Endothelial cell of umbilical vein (primary cell): ENCODE measurements at regions of chr6 and their contacts with region 1.

Region 1: DNA sequence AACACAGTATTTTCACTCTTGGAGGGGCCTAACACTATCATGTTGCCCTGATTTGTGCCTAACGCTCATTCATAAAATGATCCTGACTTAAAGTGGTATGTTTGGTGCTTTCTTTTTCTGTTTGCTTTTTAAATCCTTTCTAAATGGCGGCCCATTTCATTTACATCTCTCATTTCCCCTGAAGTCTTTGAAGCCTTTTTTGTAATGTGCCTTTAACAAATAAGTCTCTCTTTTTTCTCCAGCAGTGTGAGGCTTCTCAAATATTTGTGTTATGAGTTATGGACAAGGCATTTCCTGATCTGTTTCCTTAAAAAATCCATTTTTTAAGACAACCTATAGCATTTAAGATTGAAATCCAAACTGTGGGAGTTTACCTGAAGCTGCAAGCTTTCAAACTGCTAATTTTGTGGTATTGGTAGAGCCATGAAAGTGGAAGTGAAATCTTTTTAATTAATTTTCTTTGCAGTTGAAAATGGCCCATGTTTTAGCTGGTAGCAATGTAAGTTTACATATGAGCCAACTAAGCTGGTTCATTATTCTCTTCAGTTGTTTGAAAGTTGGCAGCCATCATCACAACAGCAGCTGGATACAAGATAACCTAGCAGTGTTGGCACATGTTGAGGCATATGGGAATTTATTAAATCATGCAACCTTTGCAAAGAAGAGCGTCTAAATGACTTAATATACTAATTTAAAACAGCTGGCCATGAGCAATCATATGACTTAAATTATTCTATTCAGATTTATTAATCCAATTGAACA is 469.7 kb downstream of the CDKAL1 start:
- DNase-seq: peak; percentile 93
- H3K4me3 ChIP-seq: peak overlapping the region in 1 of 3 experiments; percentile 29
- H3K27ac ChIP-seq: peak overlapping the region; percentile 96
- H3K4me1 ChIP-seq: peaks cover 34% of the 10 kb centered on the region
- H3K27me3 ChIP-seq: no peaks in the 10 kb centered on the region
- CTCF ChIP-seq: no peak
- POLR2A ChIP-seq: no peak

Region 2: GRCh38 chr6:20564269-20564668 is 439.7 kb before region 1 on chr6:
- CTCF ChIA-PET with region 1: interaction called, 5 read pairs
- POLR2A ChIA-PET with region 1: no interaction called
- dilution Hi-C with region 1: no loop called
- intact Hi-C with region 1: loop called (anchors 10 kb)
- DNase-seq: peak; percentile 59
- H3K4me3 ChIP-seq: peak overlapping the region in 1 of 3 experiments; percentile 28
- H3K27ac ChIP-seq: peak overlapping the region; percentile 32
- H3K4me1 ChIP-seq: peaks cover 12% of the 10 kb centered on the region
- H3K27me3 ChIP-seq: no peaks in the 10 kb centered on the region
- CTCF ChIP-seq: peak; percentile 16 to 33
- POLR2A ChIP-seq: no peak

Region 3: DNA sequence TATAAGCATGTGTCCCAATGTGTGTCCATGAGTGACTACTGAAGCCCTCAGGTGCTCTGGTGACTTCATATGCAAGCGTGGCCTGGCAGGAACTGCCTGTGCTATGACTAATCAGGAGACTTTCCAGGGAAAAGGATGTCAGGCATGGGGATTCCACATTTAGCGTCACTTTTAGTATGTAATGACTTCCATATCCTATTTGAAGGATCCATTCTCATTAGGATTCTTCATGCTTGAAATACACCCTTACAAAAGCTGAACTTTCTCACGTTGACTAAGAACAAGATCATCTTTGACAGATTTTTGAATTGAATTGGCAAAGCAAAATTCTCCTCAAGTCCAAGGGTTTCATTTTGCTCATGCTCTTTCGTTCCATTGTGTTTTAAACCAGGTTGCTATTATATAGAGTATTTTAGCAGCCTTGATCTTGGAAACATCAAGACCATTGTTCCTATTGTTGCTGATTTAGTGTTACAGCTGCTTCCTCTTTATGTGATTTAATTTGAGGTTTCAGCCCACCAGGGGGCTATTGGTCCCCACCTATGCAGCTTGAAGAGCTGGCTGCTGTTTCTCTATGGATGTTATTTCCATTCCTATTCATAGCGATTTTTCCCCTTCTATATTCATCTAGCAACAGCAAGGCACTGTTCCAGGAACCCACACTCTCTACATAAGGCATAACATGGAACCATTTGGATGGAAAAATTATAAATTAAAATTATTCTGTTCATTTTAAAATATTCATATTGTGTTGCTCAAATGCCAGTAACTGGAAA is 51.1 kb before region 1 on chr6:
- CTCF ChIA-PET with region 1: interaction called, 5 read pairs
- POLR2A ChIA-PET with region 1: no interaction called
- dilution Hi-C with region 1: no loop called
- intact Hi-C with region 1: loop called (anchors 1 kb)
- DNase-seq: peak; percentile 95
- H3K4me3 ChIP-seq: peak overlapping the region in 1 of 3 experiments; percentile 55
- H3K27ac ChIP-seq: peak overlapping the region; percentile 94
- H3K4me1 ChIP-seq: peaks cover 14% of the 10 kb centered on the region
- H3K27me3 ChIP-seq: no peaks in the 10 kb centered on the region
- CTCF ChIP-seq: peak; percentile 26 to 50
- POLR2A ChIP-seq: no peak

Region 4: DNA sequence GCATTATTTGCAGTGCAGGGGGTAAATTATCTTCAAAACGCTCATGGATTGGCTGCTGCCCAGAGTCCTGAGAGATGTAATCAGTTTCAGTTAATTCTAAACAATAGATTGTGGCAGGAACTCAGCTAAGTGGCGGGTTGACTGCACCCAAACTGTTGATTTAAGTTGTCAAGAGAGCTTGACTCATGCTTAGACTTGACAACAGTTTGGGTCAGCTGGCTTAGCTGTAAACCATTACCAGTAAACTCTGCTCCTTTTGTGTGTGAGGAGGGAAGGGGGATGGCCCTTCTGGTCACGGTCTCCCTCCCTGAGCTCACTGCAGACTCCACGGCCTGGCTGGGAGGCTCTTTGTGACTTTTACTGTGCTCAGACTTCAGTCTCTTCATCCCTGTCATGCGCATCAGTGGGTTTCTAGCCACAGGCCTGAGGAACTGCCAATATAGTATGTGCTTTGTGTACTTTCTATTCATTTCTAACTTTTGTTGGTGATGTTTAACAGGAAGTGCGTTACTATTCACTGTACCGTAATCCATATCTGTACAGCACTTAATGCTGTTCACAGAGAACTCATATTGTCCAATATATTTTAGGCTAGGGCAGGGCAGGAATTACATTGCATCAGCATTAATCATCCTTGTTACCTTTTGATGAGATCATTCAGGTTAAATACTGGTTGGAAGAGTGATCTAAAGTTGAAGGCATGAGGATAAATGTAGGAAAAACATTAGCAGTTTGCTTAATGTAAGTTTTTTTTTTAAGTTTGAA is 18.6 kb after region 1 on chr6:
- CTCF ChIA-PET with region 1: no interaction called
- POLR2A ChIA-PET with region 1: no interaction called
- dilution Hi-C with region 1: no loop called
- intact Hi-C with region 1: loop called (anchors 1 kb)
- DNase-seq: peak; percentile 92
- H3K4me3 ChIP-seq: no peak overlapping the region
- H3K27ac ChIP-seq: peak overlapping the region; percentile 75
- H3K4me1 ChIP-seq: peaks cover 39% of the 10 kb centered on the region
- H3K27me3 ChIP-seq: no peaks in the 10 kb centered on the region
- CTCF ChIP-seq: no peak
- POLR2A ChIP-seq: no peak

Region 5: GRCh38 chr6:21188505-21189223 is 184.7 kb after region 1 on chr6:
- CTCF ChIA-PET with region 1: no interaction called
- POLR2A ChIA-PET with region 1: no interaction called
- dilution Hi-C with region 1: no loop called
- intact Hi-C with region 1: loop called (anchors 2 kb)
- DNase-seq: peak; percentile 64
- H3K4me3 ChIP-seq: no peak overlapping the region
- H3K27ac ChIP-seq: peak overlapping the region; percentile 71
- H3K4me1 ChIP-seq: peaks cover 35% of the 10 kb centered on the region
- H3K27me3 ChIP-seq: no peaks in the 10 kb centered on the region
- CTCF ChIP-seq: no peak
- POLR2A ChIP-seq: no peak